HEK293T (cell line): ENCODE measurements at regions of chr2 and their contacts with region 1.

Region 1: GRCh38 chr2:218008060-218009040 is 5.6 kb upstream of the TNS1 start:
- DNase-seq: no peak

Region 2: GRCh38 chr2:217993817-217994463 is 14.4 kb before region 1 on chr2:
- CTCF ChIA-PET with region 1: interaction called, 12 read pairs
- POLR2A ChIA-PET with region 1: no interaction called
- DNase-seq: peak; percentile 77